ENCODE measurements at regions of chr3 and their contacts with region 1.

Region 1: DNA sequence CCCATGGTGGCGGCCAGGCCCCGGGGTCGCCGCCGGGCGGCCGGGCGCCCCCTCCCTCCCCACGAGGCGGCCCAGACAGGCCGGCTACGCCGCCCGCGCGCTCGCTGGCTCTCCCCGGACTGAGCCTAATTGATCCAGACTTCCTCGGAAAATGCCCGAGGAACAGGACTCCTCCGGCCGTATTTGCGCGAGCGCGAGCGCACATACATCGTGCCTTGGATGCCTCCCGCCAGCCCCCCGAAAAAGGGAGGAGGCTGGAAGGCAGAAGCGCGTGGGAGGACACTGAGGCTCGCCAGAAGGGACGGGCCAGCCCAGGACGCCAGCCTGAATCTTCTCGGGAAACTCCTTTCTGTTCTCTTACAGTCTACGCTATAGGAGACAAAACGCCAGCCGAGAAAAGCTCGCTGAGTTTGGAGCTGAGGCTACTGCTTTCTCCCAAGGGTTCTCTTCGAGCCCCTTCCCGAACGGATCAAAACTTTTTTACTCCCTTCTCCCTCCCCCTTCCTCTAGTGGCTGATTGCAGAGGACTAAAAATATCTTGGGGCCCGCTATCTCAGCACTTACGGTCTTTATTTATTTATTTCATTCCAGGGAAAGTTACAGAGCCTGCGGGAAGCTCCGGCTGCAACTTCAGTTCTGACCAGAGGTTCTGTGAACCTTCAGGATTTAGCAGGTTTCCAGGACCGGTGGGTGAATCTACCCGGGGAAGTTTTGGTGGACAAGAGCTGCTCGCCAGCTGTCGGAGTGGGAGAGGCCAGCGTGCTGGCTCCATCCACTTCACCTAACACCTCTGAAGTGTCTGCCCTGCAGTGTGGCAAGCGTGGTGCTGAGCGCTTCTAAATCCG is at the start of gene PDZRN3:
- DNase-seq: peak; percentile 61 to 86 (median 85)
- ATAC-seq: peak; percentile 59 to 68
- H3K4me3 ChIP-seq: peak within 1 kb of the TSS; percentile 53
- H3K27ac ChIP-seq: peak within 1 kb of the TSS; percentile 90
- H3K4me1 ChIP-seq: peaks cover 1% of the 10 kb centered on the region
- H3K27me3 ChIP-seq: no peaks in the 10 kb centered on the region
- total RNA-seq, gene PDZRN3: 49.8 to 96.5 (median 71.0) TPM

Region 2: GRCh38 chr3:73134034-73134433 is 491.0 kb before region 1 on chr3:
- intact Hi-C with region 1: no loop called
- DNase-seq: no peak
- ATAC-seq: no peak
- H3K4me3 ChIP-seq: no peak overlapping the region
- H3K27ac ChIP-seq: no peak overlapping the region
- H3K4me1 ChIP-seq: no peaks in the 10 kb centered on the region
- H3K27me3 ChIP-seq: no peaks in the 10 kb centered on the region

Region 3: GRCh38 chr3:73508330-73508954 is 116.6 kb before region 1 on chr3:
- intact Hi-C with region 1: loop called in 3 of 4 experiments (anchors 5 to 10 kb)
- DNase-seq: peak in 1 of 3 donors; percentile 62
- ATAC-seq: peak; percentile 61 to 73
- H3K4me3 ChIP-seq: no peak overlapping the region
- H3K27ac ChIP-seq: no peak overlapping the region
- H3K4me1 ChIP-seq: peaks cover 3% of the 10 kb centered on the region
- H3K27me3 ChIP-seq: no peaks in the 10 kb centered on the region

Region 4: GRCh38 chr3:73520865-73521461 is 104.1 kb before region 1 on chr3:
- intact Hi-C with region 1: loop called in 2 of 4 experiments (anchors 10 kb)
- DNase-seq: peak; percentile 34 to 82 (median 71)
- ATAC-seq: peak; percentile 67 to 85
- H3K4me3 ChIP-seq: no peak overlapping the region
- H3K27ac ChIP-seq: peak overlapping the region; percentile 77
- H3K4me1 ChIP-seq: peaks cover 6% of the 10 kb centered on the region
- H3K27me3 ChIP-seq: no peaks in the 10 kb centered on the region

Region 5: GRCh38 chr3:73766599-73767381 is 141.7 kb after region 1 on chr3:
- intact Hi-C with region 1: loop called in 1 of 4 experiments (anchors 10 kb)
- DNase-seq: peak in 1 of 3 donors; percentile 25
- ATAC-seq: peak; percentile 77 to 79
- H3K4me3 ChIP-seq: no peak overlapping the region
- H3K27ac ChIP-seq: peak overlapping the region; percentile 77
- H3K4me1 ChIP-seq: no peaks in the 10 kb centered on the region
- H3K27me3 ChIP-seq: no peaks in the 10 kb centered on the region

Region 6: DNA sequence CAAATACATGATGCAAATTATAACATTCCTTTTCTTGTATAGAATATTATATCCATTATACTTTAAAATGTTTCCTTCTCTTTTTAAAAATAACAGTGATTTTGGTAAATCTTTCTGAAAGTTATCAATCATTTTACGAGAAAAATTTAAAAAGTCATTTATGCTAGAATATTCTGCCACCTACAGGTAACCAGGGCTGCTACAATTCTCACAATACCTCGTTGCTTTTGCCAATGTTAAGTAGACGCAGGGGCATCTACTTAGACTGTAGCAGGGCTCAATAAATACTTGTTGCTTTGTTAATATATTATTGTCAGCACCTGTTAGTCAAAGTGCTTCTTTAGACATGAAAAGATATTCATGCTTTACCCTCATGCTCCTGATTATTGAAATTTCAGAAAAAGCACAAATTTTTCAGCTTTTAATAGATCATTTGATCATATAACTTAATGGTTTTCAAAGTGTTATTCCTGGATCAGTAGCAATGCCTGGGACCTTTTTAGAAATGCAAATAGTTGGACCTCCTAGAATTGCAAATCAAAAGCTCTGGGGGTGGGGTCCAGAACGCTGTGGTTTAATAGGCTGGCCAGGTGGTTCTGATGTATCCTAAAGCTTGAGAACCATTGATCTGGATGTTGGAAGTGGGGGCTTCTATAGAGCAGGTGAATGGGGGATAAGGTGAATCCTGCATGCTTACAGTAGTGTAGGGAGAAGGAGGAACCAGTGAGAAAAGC is 223.3 kb after region 1 on chr3:
- intact Hi-C with region 1: loop called in 2 of 4 experiments (anchors 10 kb)
- DNase-seq: no peak
- ATAC-seq: peak in 1 of 2 donors; percentile 47
- H3K4me3 ChIP-seq: no peak overlapping the region
- H3K27ac ChIP-seq: no peak overlapping the region
- H3K4me1 ChIP-seq: no peaks in the 10 kb centered on the region
- H3K27me3 ChIP-seq: no peaks in the 10 kb centered on the region